ENCODE measurements at regions of chr11 and their contacts with region 1.

Region 1: DNA sequence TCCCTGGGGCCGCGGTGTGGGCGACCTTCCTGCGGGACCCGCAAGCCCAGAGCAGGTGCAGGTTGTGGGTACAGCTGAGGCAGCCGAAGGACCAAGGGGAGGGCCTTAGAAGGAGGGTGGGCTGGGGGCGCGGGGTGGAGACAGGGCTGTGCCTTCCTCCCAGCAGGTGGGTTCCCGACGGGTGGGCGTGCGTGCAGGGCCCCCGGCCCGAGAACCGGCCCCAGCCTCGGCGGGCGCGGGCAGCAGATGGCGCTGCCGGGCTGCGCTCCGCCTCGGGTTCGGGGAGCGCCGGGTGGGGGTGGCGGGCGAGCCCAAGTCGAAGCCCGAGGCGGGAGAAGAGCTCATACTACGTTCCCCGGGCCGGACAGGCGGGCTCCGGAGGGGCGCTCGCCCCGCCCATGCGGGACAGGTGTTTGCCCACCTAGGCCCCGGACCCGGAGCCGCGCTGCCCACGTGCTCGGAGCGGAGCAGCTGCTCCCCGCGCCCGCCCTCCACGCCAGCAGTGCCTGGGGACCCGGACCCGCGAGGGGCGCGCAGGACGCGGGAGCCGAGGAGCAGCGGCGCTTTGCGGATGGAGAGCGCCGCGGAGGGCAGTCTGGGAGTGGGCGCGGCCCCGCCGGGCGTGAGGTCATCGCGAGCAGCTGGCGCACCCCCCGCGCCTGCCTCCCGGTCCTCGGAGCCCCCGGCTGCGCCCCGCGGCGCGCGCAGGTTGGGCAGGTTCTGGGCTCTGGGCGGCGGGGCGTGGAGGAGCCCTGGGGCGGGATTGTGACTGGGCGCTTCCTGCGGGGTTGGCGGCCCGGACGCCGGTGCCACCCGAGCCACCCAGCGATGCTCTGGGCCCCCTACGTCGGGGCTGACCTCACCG is 25.3 kb downstream of the DUSP8 start:
- DNase-seq: no peak
- H3K4me3 ChIP-seq: peak overlapping the region; percentile 25; the same call in 1 of the 2 replicates
- H3K27ac ChIP-seq: no peak overlapping the region
- H3K27me3 ChIP-seq: peaks cover 55% of the 10 kb centered on the region
- CTCF ChIP-seq: peak; percentile 60

Region 2: DNA sequence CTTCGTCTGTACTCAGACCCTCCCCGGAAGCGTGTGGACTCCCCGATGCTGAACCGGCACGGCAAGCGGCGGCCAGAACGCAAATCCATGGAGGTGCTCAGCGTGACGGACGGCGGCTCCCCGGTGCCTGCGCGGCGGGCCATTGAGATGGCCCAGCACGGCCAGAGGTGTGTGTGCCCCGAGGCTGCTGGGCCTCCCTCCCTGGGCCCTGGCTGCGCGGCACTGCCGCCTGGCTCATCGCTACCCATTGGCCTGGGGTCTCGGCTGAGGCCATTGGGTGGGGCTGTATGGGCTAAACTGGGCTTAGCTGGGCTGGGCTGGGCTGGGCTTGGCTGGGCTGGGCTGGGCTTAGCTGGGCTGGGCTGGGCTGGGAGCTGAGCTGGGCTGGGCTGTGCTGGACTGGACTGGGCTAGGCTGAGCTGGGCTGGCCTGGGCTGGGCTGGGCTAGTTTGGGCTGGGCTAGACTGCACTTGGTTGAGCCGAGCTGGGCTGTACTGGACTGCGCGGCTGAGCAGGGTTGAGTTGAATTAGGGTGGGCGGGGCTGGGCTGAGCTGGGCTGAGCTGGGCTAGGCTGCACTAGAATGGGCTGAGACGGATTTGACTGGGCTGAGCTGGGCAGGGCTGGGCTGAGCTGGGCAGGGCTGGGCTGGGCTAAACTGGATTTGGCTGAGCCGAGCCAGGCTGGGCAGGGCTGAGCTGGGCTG is 100.9 kb before region 1 on chr11:
- CTCF ChIA-PET with region 1: interaction called, 10 read pairs
- POLR2A ChIA-PET with region 1: no interaction called
- DNase-seq: no peak
- H3K4me3 ChIP-seq: no peak overlapping the region
- H3K27ac ChIP-seq: no peak overlapping the region
- H3K27me3 ChIP-seq: no peaks in the 10 kb centered on the region
- CTCF ChIP-seq: no peak

Region 3: DNA sequence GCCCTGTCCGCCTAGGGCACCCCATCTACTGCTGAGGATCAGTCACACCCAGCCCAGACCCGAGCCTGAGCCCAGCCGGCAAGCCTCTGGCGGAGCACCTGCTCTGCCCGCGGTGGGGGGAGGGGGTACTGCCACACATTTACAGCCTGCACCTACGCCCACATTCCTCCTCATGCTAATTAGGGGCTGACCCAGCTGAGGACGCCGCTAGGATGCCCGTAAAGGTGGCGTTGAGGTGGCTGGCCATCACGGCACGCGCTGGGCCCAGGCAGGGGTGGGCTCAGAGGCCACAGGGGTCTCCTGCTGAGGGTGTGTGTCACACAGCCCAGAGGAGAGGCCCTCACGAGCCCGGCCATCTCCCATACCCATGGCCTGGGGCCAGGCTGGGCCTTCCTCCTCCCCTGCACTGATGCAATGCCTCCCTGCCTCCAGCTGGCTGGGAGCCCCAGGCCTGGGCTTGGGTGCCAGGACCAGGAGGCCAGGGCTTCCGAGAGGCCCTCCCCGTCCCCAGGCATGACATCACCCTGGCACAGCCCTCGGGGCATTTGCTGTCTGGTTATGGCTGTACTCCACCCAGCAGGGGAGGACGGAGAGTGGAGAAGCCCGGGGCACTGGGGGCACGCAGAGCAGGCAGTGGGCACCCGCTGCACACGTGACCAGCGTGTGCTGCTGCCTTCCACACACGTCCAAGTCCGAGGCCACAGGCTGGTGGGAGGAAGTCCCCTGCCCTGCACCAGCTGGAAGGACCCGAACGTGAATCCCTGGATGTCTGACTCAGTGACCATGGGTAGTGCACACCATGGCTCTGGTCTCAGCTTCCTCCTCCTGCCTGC is 12.6 kb after region 1 on chr11:
- CTCF ChIA-PET with region 1: interaction called, 14 read pairs
- POLR2A ChIA-PET with region 1: no interaction called
- DNase-seq: no peak
- H3K4me3 ChIP-seq: no peak overlapping the region
- H3K27ac ChIP-seq: peak overlapping the region; percentile 85
- H3K27me3 ChIP-seq: no peaks in the 10 kb centered on the region
- CTCF ChIP-seq: no peak

Region 4: DNA sequence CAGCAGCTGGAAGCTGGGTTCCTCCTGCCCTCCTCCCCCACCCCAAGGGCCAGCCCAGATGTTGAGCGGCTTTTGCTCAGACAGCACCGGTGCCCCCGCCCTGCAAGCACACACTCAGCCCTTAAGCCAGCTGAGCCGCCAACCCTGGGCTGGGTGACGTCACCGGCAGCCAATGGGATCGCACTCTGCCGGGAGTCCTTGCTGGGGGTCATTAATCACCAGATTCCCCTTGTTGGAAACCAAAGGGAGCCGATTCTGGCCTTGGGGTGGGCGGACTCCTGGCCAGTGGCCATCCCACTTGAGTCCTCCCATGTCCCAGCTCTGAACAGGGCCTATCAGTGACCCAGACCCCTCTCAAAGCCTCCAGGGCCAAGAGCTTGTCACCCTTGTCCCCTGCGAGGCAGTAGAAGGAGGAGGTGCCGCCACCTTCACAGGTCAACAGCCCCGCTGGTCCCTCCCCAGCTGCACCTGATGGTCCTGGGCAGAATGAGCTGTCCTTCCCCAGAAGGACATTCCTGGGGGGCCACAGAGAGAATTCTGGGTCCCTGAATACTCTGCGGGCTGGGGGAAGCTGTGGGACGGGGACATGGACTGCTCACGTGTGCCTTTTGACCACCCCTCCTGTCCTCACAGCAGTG is 17.9 kb after region 1 on chr11:
- CTCF ChIA-PET with region 1: interaction called, 14 read pairs
- POLR2A ChIA-PET with region 1: no interaction called
- DNase-seq: peak; percentile 83
- H3K4me3 ChIP-seq: no peak overlapping the region
- H3K27ac ChIP-seq: no peak overlapping the region
- H3K27me3 ChIP-seq: no peaks in the 10 kb centered on the region
- CTCF ChIP-seq: no peak

Region 5: DNA sequence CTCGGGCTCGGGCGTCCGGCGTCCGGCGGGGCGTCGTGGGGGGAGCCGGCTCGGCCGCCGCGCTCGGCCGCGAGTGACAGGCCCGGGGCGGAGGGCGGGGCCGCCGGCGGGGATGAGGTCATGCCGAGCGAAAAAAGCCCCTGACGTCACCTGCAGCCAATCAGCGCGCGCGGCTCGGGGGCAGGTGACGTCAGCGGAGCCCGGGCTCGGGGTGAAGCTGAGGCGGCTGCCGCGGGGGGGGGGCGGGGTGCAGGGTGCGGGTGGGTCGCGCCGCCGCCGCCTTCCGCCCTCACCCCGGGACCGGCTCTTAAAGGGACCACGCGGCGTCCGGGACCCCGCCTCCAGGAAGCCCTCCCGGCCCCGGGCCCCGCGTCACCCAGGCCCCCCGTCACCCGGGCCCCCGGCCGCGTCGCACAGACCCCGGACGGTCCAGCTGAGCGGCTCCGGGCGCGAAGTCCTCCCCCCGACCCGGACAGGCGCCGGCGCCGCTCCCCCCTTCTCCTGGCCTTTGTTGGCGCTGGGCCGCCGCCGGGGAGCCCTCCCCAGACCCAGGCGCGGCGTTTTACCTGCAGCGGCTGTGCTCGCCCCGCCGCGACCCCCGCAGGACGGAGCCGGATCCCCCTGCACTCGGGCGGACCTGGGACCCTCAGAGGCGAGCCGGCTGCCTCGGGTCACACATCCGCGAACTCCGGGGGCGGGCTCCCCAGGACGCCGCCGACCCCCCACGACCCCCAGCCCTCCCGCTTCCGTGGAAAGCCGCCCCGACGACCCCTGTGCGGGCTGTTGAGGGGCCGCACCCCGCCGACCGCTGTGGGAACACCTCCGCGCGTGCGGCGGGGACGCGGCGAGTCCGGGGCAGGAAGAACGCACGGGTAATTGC is 25.7 kb after region 1 on chr11 and contains the start of gene DUSP8:
- CTCF ChIA-PET with region 1: interaction called, 87 read pairs
- POLR2A ChIA-PET with region 1: interaction called, 6 read pairs
- DNase-seq: peak; percentile 48
- H3K4me3 ChIP-seq: peak within 1 kb of the TSS; percentile 61
- H3K27ac ChIP-seq: no peak within 1 kb of the TSS
- H3K27me3 ChIP-seq: peaks cover 25% of the 10 kb centered on the region
- CTCF ChIP-seq: no peak
- polyA plus RNA-seq, gene DUSP8: 1.5 and 2.1 TPM in 2 replicates

Measured in AG04450 (cell line).